ENCODE measurements at regions of chr2 and their contacts with region 1.

Region 1: GRCh38 chr2:190360561-190360960 is 17.2 kb downstream of the INPP1 start:
- DNase-seq: no peak
- ATAC-seq: no peak
- H3K4me3 ChIP-seq: peak overlapping the region; percentile 55 to 60
- H3K4me3 Mint-ChIP-seq: peak overlapping the region; percentile 89
- H3K27ac ChIP-seq: peak overlapping the region in 1 of 2 experiments; percentile 69
- H3K27ac Mint-ChIP-seq: peak overlapping the region; percentile 10
- H3K4me1 ChIP-seq: peaks cover 15% of the 10 kb centered on the region
- H3K4me1 Mint-ChIP-seq: peaks cover 34% of the 10 kb centered on the region
- H3K27me3 ChIP-seq: no peaks in the 10 kb centered on the region
- H3K27me3 Mint-ChIP-seq: no peaks in the 10 kb centered on the region
- CTCF ChIP-seq: no peak

Region 2: GRCh38 chr2:190255676-190256075 is 104.9 kb before region 1 on chr2:
- CTCF ChIA-PET with region 1: no interaction called
- POLR2A ChIA-PET with region 1: no interaction called
- intact Hi-C with region 1: no loop called
- DNase-seq: no peak
- ATAC-seq: no peak
- H3K4me3 ChIP-seq: no peak overlapping the region
- H3K4me3 Mint-ChIP-seq: no peak overlapping the region
- H3K27ac ChIP-seq: no peak overlapping the region
- H3K27ac Mint-ChIP-seq: no peak overlapping the region
- H3K4me1 ChIP-seq: no peaks in the 10 kb centered on the region
- H3K4me1 Mint-ChIP-seq: no peaks in the 10 kb centered on the region
- H3K27me3 ChIP-seq: no peaks in the 10 kb centered on the region
- H3K27me3 Mint-ChIP-seq: no peaks in the 10 kb centered on the region
- CTCF ChIP-seq: no peak

Region 3: DNA sequence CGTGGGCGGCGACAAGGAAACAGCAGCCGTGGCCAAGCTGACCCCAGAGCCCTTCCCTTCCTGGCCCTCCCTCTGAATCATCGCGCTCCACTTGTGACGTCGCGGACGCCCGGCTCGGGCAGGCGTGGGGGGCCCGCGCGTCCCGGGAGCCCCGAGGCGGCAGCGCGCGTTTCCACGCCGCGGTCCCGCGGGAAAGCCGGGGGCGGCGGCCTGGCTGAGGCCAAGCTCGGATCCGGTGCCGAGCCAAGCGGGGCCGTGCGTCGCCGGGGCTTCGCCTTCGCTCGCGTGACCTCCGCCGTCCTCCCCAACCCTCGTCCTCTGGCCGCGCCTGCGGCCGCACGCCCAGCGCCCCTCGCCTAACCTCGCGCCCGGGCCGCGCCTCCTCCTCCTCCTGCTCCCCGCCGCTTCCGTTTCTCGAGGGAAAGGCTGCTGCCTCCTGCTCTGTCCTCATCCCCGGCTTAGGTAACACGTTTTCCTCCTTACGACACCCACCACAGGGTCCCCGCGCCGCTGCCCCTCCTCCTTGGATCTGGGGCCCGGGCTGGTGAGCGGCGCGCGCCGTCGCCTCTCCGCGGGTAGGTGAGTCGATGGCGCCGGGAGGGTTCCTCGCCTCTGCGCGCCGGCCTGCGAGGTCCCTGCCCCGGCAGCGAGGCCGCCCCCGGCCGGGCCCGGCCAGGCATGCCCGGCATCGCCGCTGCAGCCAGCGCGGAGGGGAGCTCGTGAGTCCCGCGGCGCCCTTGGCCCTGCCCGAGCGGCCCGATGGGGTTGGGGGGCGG is 16.9 kb before region 1 on chr2 and contains the start of gene INPP1:
- CTCF ChIA-PET with region 1: interaction called, 6 read pairs
- POLR2A ChIA-PET with region 1: interaction called, 17 read pairs
- intact Hi-C with region 1: loop called in 1 of 2 experiments (anchors 2 kb)
- DNase-seq: peak; percentile 5 to 62 (median 40)
- ATAC-seq: peak; percentile 71
- H3K4me3 ChIP-seq: peak within 1 kb of the TSS; percentile 54 to 74
- H3K4me3 Mint-ChIP-seq: peak within 1 kb of the TSS; percentile 89
- H3K27ac ChIP-seq: peak within 1 kb of the TSS; percentile 19 to 24
- H3K27ac Mint-ChIP-seq: peak within 1 kb of the TSS; percentile 75
- H3K4me1 ChIP-seq: peaks cover 13% of the 10 kb centered on the region
- H3K4me1 Mint-ChIP-seq: peaks cover 10% of the 10 kb centered on the region
- H3K27me3 ChIP-seq: no peaks in the 10 kb centered on the region
- H3K27me3 Mint-ChIP-seq: peaks cover 2% of the 10 kb centered on the region
- CTCF ChIP-seq: no peak
- total RNA-seq, gene INPP1: 1.6 to 2.9 TPM

Region 4: DNA sequence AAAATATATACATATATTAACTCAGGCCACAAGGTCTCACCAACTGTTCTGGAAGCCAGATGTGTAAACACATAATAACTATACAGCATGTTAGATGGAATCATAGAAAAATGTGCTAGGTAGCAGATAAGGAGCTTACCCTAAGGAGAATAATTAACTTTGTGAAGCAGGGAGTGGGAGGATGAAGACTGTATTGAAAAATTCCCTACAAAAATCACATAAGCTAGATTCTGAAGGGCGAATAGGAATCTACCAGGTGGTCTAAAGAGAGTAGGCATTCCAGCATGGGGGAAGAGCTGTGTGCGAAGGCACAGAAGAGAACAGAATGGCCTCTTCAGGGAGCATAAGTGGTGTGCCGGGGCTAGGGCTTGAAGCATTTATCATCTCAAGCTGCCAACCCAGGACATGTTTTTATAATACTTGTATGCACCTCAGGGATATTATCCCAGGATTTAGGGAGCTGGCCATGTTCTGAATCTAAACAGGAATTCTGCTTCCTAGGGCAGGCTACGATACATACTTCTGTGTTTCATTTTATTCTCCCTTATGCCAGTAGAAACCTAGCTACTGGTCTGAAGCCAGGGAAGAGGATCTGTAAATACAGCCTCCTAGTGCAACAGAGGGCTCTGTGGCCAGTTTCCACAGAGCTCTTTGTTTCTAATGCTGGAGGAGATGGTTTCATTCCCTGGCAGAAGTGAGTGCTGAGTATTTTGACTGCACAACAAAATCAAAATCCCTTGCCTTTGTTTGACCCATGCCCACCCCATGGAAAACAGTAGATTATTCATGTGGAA is 117.3 kb after region 1 on chr2:
- CTCF ChIA-PET with region 1: no interaction called
- POLR2A ChIA-PET with region 1: no interaction called
- intact Hi-C with region 1: no loop called
- DNase-seq: no peak
- ATAC-seq: no peak
- H3K4me3 ChIP-seq: no peak overlapping the region
- H3K4me3 Mint-ChIP-seq: no peak overlapping the region
- H3K27ac ChIP-seq: no peak overlapping the region
- H3K27ac Mint-ChIP-seq: peak overlapping the region; percentile 19
- H3K4me1 ChIP-seq: no peaks in the 10 kb centered on the region
- H3K4me1 Mint-ChIP-seq: peaks cover 35% of the 10 kb centered on the region
- H3K27me3 ChIP-seq: no peaks in the 10 kb centered on the region
- H3K27me3 Mint-ChIP-seq: no peaks in the 10 kb centered on the region
- CTCF ChIP-seq: no peak